Sciatic nerve (tissue), 2 donors: ENCODE measurements at regions of chr11 and their contacts with region 1.

Region 1: DNA sequence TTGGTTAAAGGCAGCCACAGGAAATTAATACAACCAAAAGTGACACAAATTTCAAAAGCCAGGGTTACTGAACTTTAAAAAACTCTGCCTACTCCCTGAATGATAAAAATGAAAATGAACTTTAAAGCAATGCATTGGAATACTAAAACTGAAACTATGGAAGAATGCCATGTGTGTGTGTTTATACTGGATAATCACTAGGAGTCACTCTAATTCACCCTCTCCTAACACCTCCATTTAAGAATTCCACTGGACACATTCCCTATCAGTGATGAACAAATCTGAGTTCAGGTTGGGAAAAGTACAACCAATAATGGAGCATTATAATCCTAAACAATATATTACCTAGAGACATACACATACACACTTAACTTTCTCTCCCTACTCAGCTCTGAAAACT is 27.5 kb upstream of the PLAAT3 start:
- DNase-seq: no peak
- ATAC-seq: no peak

Region 2: GRCh38 chr11:63478896-63479295 is 162.8 kb before region 1 on chr11:
- intact Hi-C with region 1: loop called (anchors 10 kb)
- DNase-seq: no peak
- ATAC-seq: peak; percentile 94

Region 3: DNA sequence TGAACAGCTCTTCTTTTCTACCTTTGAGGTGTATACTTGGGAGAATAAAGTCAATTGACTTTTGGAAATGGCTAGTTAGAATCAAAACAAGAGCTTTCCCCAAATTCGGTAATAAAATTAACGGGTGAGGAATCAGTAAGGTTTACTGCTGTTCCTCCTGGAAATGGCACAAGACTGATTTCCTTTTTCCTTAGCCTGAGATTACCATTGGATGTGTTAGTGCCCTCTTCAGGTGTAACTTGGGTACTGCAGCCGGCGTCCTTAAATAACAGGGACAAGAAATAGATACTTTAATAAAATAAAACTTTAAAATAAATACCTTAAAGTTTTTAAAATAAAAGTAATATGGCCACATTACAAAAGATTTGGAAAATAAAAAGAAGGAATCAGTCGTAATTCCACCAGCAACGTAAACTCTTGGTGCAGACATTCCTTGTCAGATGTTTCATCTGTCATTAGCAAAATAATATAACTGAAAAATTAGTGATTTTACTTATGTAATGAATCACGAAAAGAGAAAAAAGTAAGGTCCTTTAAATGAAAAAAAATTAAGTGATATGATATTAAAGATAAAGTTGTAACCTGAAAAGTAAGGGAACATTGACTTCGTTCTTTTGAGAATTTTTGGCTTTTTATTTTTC is 97.1 kb after region 1 on chr11:
- intact Hi-C with region 1: loop called (anchors 10 kb)
- DNase-seq: peak; percentile 86
- ATAC-seq: peak; percentile 75